GM12878 (cell line): ENCODE measurements at regions of chr6 and their contacts with region 1.

Region 1: GRCh38 chr6:17584241-17584803 is 15.8 kb upstream of the FAM8A1 start:
- DNase-seq: no peak
- ATAC-seq: peak; percentile 87
- H3K4me3 ChIP-seq: no peak overlapping the region
- H3K27ac ChIP-seq: no peak overlapping the region
- H3K4me1 ChIP-seq: no peaks in the 10 kb centered on the region
- H3K27me3 ChIP-seq: no peaks in the 10 kb centered on the region
- CTCF ChIP-seq: peak; percentile 14 to 58 (median 58); a peak in 5 of 6 replicates
- EP300 ChIP-seq: no peak
- POLR2A ChIP-seq: no peak
- RAD21 ChIP-seq: peak; percentile 68

Region 2: GRCh38 chr6:17156112-17156921 is 428.0 kb before region 1 on chr6:
- CTCF ChIA-PET with region 1: interaction called, 70 read pairs
- POLR2A ChIA-PET with region 1: no interaction called
- RAD21 ChIA-PET with region 1: interaction called, 27 read pairs
- SMC1A ChIA-PET with region 1: interaction called, 60 read pairs
- in situ Hi-C with region 1: loop called (anchors 5 kb)
- intact Hi-C with region 1: loop called (anchors 1 kb)
- DNase-seq: peak; percentile 20
- ATAC-seq: peak; percentile 79
- H3K4me3 ChIP-seq: no peak overlapping the region
- H3K27ac ChIP-seq: no peak overlapping the region
- H3K4me1 ChIP-seq: no peaks in the 10 kb centered on the region
- H3K27me3 ChIP-seq: no peaks in the 10 kb centered on the region
- CTCF ChIP-seq: peak; percentile 61 to 79 (median 66); a peak in 5 of 6 replicates
- EP300 ChIP-seq: no peak
- POLR2A ChIP-seq: no peak
- RAD21 ChIP-seq: peak; percentile 94

Region 3: GRCh38 chr6:17505062-17505476 is 79.3 kb before region 1 on chr6:
- CTCF ChIA-PET with region 1: interaction called, 11 read pairs
- POLR2A ChIA-PET with region 1: interaction called, 4 read pairs
- RAD21 ChIA-PET with region 1: interaction called, 9 read pairs
- SMC1A ChIA-PET with region 1: interaction called, 6 read pairs
- in situ Hi-C with region 1: no loop called
- intact Hi-C with region 1: no loop called
- DNase-seq: no peak
- ATAC-seq: peak; percentile 66
- H3K4me3 ChIP-seq: no peak overlapping the region
- H3K27ac ChIP-seq: no peak overlapping the region
- H3K4me1 ChIP-seq: no peaks in the 10 kb centered on the region
- H3K27me3 ChIP-seq: no peaks in the 10 kb centered on the region
- CTCF ChIP-seq: peak; percentile 15 to 21 (median 20); a peak in 2 of 6 replicates
- EP300 ChIP-seq: no peak
- POLR2A ChIP-seq: no peak
- RAD21 ChIP-seq: peak; percentile 22; the same call in 1 of the 2 replicates

Region 4: GRCh38 chr6:17768388-17768787 is 184.1 kb after region 1 on chr6:
- CTCF ChIA-PET with region 1: no interaction called
- POLR2A ChIA-PET with region 1: no interaction called
- RAD21 ChIA-PET with region 1: no interaction called
- SMC1A ChIA-PET with region 1: no interaction called
- in situ Hi-C with region 1: no loop called
- intact Hi-C with region 1: no loop called
- DNase-seq: no peak
- ATAC-seq: no peak
- H3K4me3 ChIP-seq: no peak overlapping the region
- H3K27ac ChIP-seq: no peak overlapping the region
- H3K4me1 ChIP-seq: no peaks in the 10 kb centered on the region
- H3K27me3 ChIP-seq: no peaks in the 10 kb centered on the region
- CTCF ChIP-seq: no peak
- EP300 ChIP-seq: no peak
- POLR2A ChIP-seq: no peak
- RAD21 ChIP-seq: no peak

Region 5: DNA sequence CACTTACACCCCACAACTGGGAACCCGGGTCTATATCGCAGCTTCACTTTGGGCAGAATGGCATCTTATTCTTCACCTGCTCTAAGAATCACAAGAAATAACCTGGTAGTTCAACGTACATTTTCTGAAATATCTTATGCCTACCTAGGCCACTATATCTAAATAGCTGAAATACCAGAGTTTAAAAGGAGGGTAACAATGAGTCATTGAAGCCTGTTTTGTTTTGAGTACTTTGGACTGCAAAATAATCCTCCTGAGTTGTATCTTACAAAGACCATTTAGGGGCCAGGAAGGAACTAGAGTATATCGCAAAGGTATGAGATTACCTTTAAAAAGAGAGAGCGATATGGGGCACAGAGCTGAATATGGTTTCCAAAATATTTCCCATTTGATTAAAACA is 219.1 kb after region 1 on chr6:
- CTCF ChIA-PET with region 1: interaction called, 39 read pairs
- POLR2A ChIA-PET with region 1: interaction called, 3 read pairs
- RAD21 ChIA-PET with region 1: interaction called, 3 read pairs
- SMC1A ChIA-PET with region 1: interaction called, 10 read pairs
- in situ Hi-C with region 1: no loop called
- intact Hi-C with region 1: loop called (anchors 1 kb)
- DNase-seq: no peak
- ATAC-seq: no peak
- H3K4me3 ChIP-seq: no peak overlapping the region
- H3K27ac ChIP-seq: no peak overlapping the region
- H3K4me1 ChIP-seq: no peaks in the 10 kb centered on the region
- H3K27me3 ChIP-seq: no peaks in the 10 kb centered on the region
- CTCF ChIP-seq: no peak
- EP300 ChIP-seq: no peak
- POLR2A ChIP-seq: no peak
- RAD21 ChIP-seq: no peak

Region 6: GRCh38 chr6:17808609-17809008 is 224.3 kb after region 1 on chr6:
- CTCF ChIA-PET with region 1: interaction called, 39 read pairs
- POLR2A ChIA-PET with region 1: no interaction called
- RAD21 ChIA-PET with region 1: interaction called, 3 read pairs
- SMC1A ChIA-PET with region 1: interaction called, 10 read pairs
- in situ Hi-C with region 1: no loop called
- intact Hi-C with region 1: loop called (anchors 1 kb)
- DNase-seq: no peak
- ATAC-seq: no peak
- H3K4me3 ChIP-seq: no peak overlapping the region
- H3K27ac ChIP-seq: no peak overlapping the region
- H3K4me1 ChIP-seq: no peaks in the 10 kb centered on the region
- H3K27me3 ChIP-seq: no peaks in the 10 kb centered on the region
- CTCF ChIP-seq: no peak
- EP300 ChIP-seq: no peak
- POLR2A ChIP-seq: no peak
- RAD21 ChIP-seq: no peak

Region 7: GRCh38 chr6:17820055-17820454 is 235.7 kb after region 1 on chr6:
- CTCF ChIA-PET with region 1: interaction called, 19 read pairs
- POLR2A ChIA-PET with region 1: no interaction called
- RAD21 ChIA-PET with region 1: interaction called, 10 read pairs
- SMC1A ChIA-PET with region 1: interaction called, 8 read pairs
- in situ Hi-C with region 1: no loop called
- intact Hi-C with region 1: loop called (anchors 1 kb)
- DNase-seq: no peak
- ATAC-seq: peak; percentile 60; the same call in 2 of the 3 replicates
- H3K4me3 ChIP-seq: no peak overlapping the region
- H3K27ac ChIP-seq: no peak overlapping the region
- H3K4me1 ChIP-seq: no peaks in the 10 kb centered on the region
- H3K27me3 ChIP-seq: no peaks in the 10 kb centered on the region
- CTCF ChIP-seq: no peak
- EP300 ChIP-seq: no peak
- POLR2A ChIP-seq: no peak
- RAD21 ChIP-seq: no peak